ENCODE measurements at regions of chr12 and their contacts with region 1.

Region 1: GRCh38 chr12:100564090-100564489 is 9.4 kb upstream of the GAS2L3 start:
- DNase-seq: peak; percentile 91
- H3K4me3 ChIP-seq: peak overlapping the region in 1 of 3 experiments; percentile 45
- H3K27ac ChIP-seq: peak overlapping the region; percentile 95
- H3K4me1 ChIP-seq: peaks cover 18% of the 10 kb centered on the region
- H3K27me3 ChIP-seq: peaks cover 5 to 13% of the 10 kb centered on the region in 2 experiments
- CTCF ChIP-seq: no peak
- POLR2A ChIP-seq: no peak

Region 2: GRCh38 chr12:100142851-100143559 is 421.1 kb before region 1 on chr12 and contains the start of gene BLTP3B:
- CTCF ChIA-PET with region 1: no interaction called
- POLR2A ChIA-PET with region 1: no interaction called
- dilution Hi-C with region 1: no loop called
- intact Hi-C with region 1: loop called (anchors 2 kb)
- DNase-seq: peak; percentile 78
- H3K4me3 ChIP-seq: peak within 1 kb of the TSS; percentile 64 to 97 (median 74)
- H3K27ac ChIP-seq: peak within 1 kb of the TSS; percentile 91
- H3K4me1 ChIP-seq: peaks cover 5% of the 10 kb centered on the region
- H3K27me3 ChIP-seq: no peaks in the 10 kb centered on the region
- CTCF ChIP-seq: no peak
- POLR2A ChIP-seq: peak; percentile 53
- total RNA-seq, gene BLTP3B: 16.0 and 17.9 TPM in 2 replicates

Measured in endothelial cell of umbilical vein (primary cell).